CD8-positive, alpha-beta memory T cell (primary cell): ENCODE measurements at regions of chr17 and their contacts with region 1.

Region 1: DNA sequence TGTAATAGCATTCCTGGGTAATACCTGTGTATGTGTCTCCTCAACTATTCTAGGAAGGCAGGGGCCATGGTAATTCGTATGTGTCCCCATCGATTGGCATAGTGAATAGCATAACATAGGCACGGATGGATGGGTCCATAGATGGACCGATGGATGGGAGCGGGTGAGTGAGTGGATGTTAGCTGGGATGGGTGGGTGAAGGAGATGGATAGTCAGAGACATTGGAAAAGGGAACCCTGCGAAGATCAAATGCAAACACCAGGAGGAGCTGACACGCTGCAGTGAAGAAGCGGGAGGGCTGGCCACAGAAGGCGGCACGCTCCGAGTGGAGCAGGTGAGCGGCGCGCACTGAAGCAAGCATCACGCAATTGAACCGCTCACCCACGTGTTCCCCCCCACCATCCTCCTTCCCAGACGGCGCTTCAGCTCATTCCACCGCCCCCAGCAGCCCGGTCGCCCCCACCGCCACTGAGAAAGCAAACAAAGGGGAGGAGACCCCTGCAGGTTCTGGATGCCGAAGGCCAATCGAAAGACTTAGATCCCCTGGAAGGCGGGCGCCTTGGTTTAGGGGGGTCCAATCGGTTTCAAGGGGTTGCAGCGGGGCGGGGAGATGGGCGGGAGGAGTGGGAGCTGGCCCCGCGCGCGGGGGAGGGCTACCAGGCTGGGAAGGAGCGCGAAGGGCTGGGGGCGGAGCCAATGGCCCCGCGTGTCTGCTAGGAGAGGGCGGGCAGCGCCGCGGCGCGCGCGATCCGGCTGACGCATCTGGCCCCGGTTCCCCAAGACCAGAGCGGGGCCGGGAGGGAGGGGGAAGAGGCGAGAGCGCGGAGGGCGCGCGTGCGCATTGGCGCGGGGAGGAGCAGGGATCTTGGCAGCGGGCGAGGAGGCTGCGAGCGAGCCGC is at the start of gene ARRB2:
- DNase-seq: peak; percentile 99 to 100 (median 99)
- H3K4me3 ChIP-seq: peak within 1 kb of the TSS; percentile 86
- H3K4me3 Mint-ChIP-seq: peak within 1 kb of the TSS; percentile 78 to 99 (median 98)
- H3K27ac ChIP-seq: peak within 1 kb of the TSS; percentile 77
- H3K27ac Mint-ChIP-seq: peak within 1 kb of the TSS; percentile 68 to 98 (median 94)
- H3K4me1 ChIP-seq: peaks cover 40% of the 10 kb centered on the region
- H3K4me1 Mint-ChIP-seq: peaks cover 42 to 56% (median 51%) of the 10 kb centered on the region in 3 donors
- H3K27me3 ChIP-seq: no peaks in the 10 kb centered on the region
- H3K27me3 Mint-ChIP-seq: peaks cover 0 to 2% of the 10 kb centered on the region in 2 donors
- total RNA-seq, gene ARRB2: 170 to 172 TPM

Region 2: DNA sequence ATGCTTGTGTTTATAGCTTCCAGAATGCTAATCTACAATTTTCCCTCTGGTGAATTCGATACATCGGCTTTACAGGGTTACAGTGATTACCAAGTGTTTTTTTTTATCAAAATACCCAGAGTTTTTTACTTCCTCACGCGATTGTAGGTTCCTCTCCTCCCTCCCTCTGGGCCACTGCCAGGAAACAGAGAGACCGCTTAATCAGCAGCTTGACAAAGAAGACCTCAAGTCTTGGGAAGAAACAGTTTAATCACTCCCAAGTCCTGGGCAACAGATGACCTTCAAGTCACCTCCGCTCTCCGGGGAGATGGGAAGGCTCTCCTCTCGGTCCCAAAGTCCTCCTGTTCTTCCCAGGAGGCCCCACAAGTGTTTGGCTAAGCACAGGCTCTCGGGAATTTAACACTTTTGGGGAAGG is 102.3 kb before region 1 on chr17:
- CTCF ChIA-PET with region 1: no interaction called
- POLR2A ChIA-PET with region 1: no interaction called
- DNase-seq: no peak
- H3K4me3 ChIP-seq: no peak overlapping the region
- H3K4me3 Mint-ChIP-seq: no peak overlapping the region
- H3K27ac ChIP-seq: no peak overlapping the region
- H3K27ac Mint-ChIP-seq: no peak overlapping the region
- H3K4me1 ChIP-seq: no peaks in the 10 kb centered on the region
- H3K4me1 Mint-ChIP-seq: no peaks in the 10 kb centered on the region
- H3K27me3 ChIP-seq: no peaks in the 10 kb centered on the region
- H3K27me3 Mint-ChIP-seq: peaks cover 6 to 36% of the 10 kb centered on the region in 2 donors

Region 3: DNA sequence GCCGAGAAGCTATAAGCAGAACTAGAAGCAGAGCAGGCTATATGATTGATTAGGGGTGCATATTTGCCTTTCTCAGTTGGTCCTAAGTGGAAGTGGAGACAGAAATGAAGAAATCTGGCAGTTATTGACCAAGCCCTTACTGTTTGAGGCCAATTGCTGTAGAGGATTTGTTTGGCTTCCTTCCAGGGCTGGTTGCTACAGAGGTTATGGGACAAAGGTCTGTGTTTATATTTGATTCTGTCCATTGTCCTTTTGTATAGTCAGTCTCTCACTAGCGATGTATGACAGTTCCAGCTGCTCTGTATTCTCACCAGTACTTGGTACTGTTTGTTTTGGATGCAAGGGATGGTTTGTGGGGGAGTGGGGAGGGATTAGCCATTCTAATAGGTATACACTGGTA is 61.3 kb before region 1 on chr17:
- CTCF ChIA-PET with region 1: no interaction called
- POLR2A ChIA-PET with region 1: no interaction called
- DNase-seq: no peak
- H3K4me3 ChIP-seq: no peak overlapping the region
- H3K4me3 Mint-ChIP-seq: no peak overlapping the region
- H3K27ac ChIP-seq: no peak overlapping the region
- H3K27ac Mint-ChIP-seq: no peak overlapping the region
- H3K4me1 ChIP-seq: no peaks in the 10 kb centered on the region
- H3K4me1 Mint-ChIP-seq: no peaks in the 10 kb centered on the region
- H3K27me3 ChIP-seq: peaks cover 5% of the 10 kb centered on the region
- H3K27me3 Mint-ChIP-seq: peaks cover 31 to 52% of the 10 kb centered on the region in 2 donors

Region 4: GRCh38 chr17:4733073-4733531 is 23.1 kb after region 1 on chr17:
- CTCF ChIA-PET with region 1: interaction called, 12 read pairs
- POLR2A ChIA-PET with region 1: interaction called, 13 read pairs
- DNase-seq: no peak
- H3K4me3 ChIP-seq: no peak overlapping the region
- H3K4me3 Mint-ChIP-seq: peak overlapping the region in 4 of 7 donors; percentile 47 to 99 (median 80)
- H3K27ac ChIP-seq: no peak overlapping the region
- H3K27ac Mint-ChIP-seq: peak overlapping the region in 2 of 8 donors; percentile 68 to 71
- H3K4me1 ChIP-seq: peaks cover 1% of the 10 kb centered on the region
- H3K4me1 Mint-ChIP-seq: peaks cover 22 to 31% (median 27%) of the 10 kb centered on the region in 3 donors
- H3K27me3 ChIP-seq: no peaks in the 10 kb centered on the region
- H3K27me3 Mint-ChIP-seq: peaks cover 0 to 1% of the 10 kb centered on the region in 2 donors

Region 5: DNA sequence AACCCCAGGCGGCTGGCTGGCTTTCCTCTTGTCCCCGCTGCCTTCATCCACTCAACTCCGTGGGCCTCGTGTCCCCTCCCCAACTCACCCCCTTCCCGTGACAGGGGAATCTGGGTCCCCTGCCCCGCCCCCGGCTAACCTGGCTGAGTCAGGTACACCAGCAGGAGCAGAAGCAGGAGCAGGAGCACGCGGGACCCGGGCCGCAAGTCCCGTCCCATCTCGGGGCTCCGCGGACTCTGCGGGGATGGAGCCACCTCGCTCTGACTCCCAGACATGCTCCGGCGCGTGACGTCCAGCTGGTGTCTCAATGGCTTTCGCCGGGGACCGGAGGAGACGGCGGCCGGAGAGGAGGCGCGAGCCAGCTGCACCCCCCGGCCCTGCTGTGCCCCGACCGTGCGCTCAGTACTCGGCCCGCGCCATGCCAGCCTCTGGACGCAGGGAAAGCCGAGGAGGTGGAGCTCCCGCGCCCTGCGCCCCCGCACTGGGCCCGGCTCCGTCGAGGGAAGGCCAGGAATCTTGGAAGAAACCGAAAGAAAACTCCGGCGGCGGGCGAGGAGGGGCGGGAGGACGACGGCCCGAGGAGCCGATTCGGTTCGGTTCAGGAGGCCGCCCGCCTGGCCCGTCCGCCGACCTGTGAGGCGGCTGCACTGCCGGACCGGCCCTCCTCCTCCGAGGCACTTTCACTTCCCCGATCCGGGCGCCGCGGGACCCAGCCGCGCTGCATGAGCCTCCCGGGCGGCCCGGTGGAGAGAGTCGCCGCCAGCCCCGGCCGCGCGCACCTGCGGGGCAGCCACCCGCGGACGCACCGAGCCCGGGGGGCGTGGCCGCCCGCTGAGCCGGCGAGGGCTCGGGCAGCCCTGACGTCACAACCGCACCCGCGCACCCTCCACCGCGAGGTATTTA is 29.3 kb after region 1 on chr17 and contains the starts of genes CXCL16 and ZMYND15:
- CTCF ChIA-PET with region 1: interaction called, 11 read pairs
- POLR2A ChIA-PET with region 1: interaction called, 3 read pairs
- DNase-seq: peak; percentile 53 to 77 (median 69)
- H3K4me3 ChIP-seq: peak within 1 kb of the TSS; percentile 75
- H3K4me3 Mint-ChIP-seq: peak within 1 kb of the TSS; percentile 90 to 96 (median 94)
- H3K27ac ChIP-seq: no peak within 1 kb of the TSS
- H3K27ac Mint-ChIP-seq: peak within 1 kb of the TSS; percentile 36 to 96 (median 90)
- H3K4me1 ChIP-seq: peaks cover 18% of the 10 kb centered on the region
- H3K4me1 Mint-ChIP-seq: peaks cover 17 to 19% (median 18%) of the 10 kb centered on the region in 3 donors
- H3K27me3 ChIP-seq: peaks cover 10% of the 10 kb centered on the region
- H3K27me3 Mint-ChIP-seq: peaks cover 14% of the 10 kb centered on the region in 2 donors
- total RNA-seq, gene CXCL16: 2.4 to 2.8 TPM
- total RNA-seq, gene ZMYND15: 0.09 TPM in 1 of 2 experiments, not detected in the other

Region 6: DNA sequence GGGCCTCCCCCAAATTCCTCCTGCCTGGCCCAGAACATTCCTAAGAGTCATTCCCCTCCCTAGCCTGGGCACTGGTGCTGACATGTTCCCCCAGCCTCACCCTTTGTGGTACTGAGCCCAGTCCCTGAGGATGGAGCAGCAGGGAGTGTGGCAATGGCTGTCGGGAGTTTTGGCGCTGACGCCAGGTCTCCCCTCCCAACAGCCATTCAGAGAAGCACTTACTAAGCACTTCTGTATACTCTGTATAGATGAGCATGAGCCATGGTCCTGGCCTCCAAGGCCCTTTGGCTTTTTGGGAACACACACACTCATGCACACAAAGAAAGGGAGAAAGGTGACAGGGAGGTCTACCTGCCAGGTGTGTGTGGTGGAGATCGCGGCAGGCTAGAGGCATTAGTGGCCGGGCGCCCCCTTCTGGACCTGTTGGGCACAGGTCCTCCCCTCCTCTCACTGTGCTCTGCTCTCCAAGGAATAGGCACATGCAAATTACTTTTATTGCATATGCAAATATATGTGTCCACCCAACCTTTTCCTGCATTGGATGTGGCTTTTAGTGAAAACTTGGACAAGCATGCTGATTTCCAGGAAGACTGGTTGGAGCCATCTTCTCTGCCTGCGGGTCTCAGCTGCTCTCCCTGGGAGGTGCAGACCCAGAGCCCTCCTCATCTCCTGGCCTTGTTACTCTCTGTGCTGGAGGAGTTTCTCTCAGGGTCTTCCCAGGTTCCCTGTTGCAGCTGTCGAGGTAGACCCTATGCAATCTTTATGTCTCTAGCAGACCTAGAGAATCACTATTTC is 171.9 kb after region 1 on chr17:
- CTCF ChIA-PET with region 1: interaction called, 34 read pairs
- POLR2A ChIA-PET with region 1: interaction called, 9 read pairs
- DNase-seq: peak; percentile 42 to 78 (median 45)
- H3K4me3 ChIP-seq: no peak overlapping the region
- H3K4me3 Mint-ChIP-seq: no peak overlapping the region
- H3K27ac ChIP-seq: no peak overlapping the region
- H3K27ac Mint-ChIP-seq: peak overlapping the region in 4 of 8 donors; percentile 12 to 75 (median 64)
- H3K4me1 ChIP-seq: no peaks in the 10 kb centered on the region
- H3K4me1 Mint-ChIP-seq: peaks cover 0 to 2% (median 0%) of the 10 kb centered on the region in 3 donors
- H3K27me3 ChIP-seq: no peaks in the 10 kb centered on the region
- H3K27me3 Mint-ChIP-seq: no peaks in the 10 kb centered on the region

Region 7: DNA sequence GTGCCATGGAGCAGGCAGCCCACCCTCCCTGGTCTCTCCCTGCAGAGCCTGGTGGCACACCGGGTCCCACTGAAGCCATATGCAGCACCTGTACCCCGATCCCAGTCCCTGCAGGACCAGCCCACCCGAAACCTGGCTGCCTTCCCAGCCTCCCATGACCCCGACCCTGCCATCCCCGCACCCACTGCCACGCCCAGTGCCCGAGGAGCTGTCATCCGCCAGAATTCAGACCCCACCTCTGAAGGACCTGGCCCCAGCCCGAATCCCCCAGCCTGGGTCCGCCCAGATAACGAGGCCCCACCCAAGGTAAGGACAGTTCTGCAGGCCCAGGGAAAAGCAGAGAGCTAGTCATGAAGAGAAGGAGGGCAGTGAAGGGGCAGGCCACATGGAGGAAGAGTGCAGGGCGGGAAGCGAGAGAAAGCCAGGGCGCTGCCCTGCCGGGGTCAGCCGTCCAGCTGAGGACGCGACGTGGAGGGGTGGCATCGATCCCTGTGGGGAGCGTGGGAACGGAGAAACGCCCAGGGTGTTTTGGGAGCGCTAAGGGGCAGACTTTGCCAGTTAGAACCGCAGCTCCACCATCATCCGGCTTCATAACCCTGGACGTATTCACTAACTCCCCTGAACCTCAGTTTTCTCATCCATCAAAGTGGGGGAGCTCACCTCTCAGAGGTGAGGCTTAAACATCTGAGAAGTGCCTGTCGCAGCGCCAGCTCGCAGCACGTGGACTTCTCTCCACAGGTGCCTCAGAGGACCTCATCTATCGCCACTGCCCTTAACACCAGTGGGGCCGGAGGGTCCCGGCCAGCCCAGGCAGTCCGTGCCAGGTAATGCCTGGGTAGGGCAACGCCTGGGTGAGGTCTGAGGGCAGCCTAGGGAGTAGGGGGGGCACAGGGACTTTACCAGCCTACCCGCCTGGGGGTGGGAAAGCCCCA is 181.6 kb after region 1 on chr17:
- CTCF ChIA-PET with region 1: interaction called, 34 read pairs
- POLR2A ChIA-PET with region 1: interaction called, 4 read pairs
- DNase-seq: peak in 1 of 5 donors; percentile 48
- H3K4me3 ChIP-seq: no peak overlapping the region
- H3K4me3 Mint-ChIP-seq: no peak overlapping the region
- H3K27ac ChIP-seq: no peak overlapping the region
- H3K27ac Mint-ChIP-seq: peak overlapping the region in 2 of 8 donors; percentile 32 to 77
- H3K4me1 ChIP-seq: no peaks in the 10 kb centered on the region
- H3K4me1 Mint-ChIP-seq: peaks cover 2 to 5% (median 4%) of the 10 kb centered on the region in 3 donors
- H3K27me3 ChIP-seq: no peaks in the 10 kb centered on the region
- H3K27me3 Mint-ChIP-seq: peaks cover 0 to 3% of the 10 kb centered on the region in 2 donors

Region 8: GRCh38 chr17:4903051-4903818 is 193.2 kb after region 1 on chr17 and contains the start of gene CHRNE:
- CTCF ChIA-PET with region 1: interaction called, 14 read pairs
- POLR2A ChIA-PET with region 1: interaction called, 4 read pairs
- DNase-seq: peak; percentile 63 to 82 (median 71)
- H3K4me3 ChIP-seq: peak within 1 kb of the TSS; percentile 61
- H3K4me3 Mint-ChIP-seq: peak within 1 kb of the TSS; percentile 70 to 86 (median 79)
- H3K27ac ChIP-seq: peak within 1 kb of the TSS; percentile 58
- H3K27ac Mint-ChIP-seq: peak within 1 kb of the TSS; percentile 83 to 96 (median 92)
- H3K4me1 ChIP-seq: peaks cover 46% of the 10 kb centered on the region
- H3K4me1 Mint-ChIP-seq: peaks cover 28 to 58% (median 35%) of the 10 kb centered on the region in 3 donors
- H3K27me3 ChIP-seq: no peaks in the 10 kb centered on the region
- H3K27me3 Mint-ChIP-seq: peaks cover 0 to 7% of the 10 kb centered on the region in 2 donors
- total RNA-seq, gene CHRNE: 0.37 to 0.38 TPM